OCI-LY7 (cell line): ENCODE measurements at regions of chr6 and their contacts with region 1.

Region 1: DNA sequence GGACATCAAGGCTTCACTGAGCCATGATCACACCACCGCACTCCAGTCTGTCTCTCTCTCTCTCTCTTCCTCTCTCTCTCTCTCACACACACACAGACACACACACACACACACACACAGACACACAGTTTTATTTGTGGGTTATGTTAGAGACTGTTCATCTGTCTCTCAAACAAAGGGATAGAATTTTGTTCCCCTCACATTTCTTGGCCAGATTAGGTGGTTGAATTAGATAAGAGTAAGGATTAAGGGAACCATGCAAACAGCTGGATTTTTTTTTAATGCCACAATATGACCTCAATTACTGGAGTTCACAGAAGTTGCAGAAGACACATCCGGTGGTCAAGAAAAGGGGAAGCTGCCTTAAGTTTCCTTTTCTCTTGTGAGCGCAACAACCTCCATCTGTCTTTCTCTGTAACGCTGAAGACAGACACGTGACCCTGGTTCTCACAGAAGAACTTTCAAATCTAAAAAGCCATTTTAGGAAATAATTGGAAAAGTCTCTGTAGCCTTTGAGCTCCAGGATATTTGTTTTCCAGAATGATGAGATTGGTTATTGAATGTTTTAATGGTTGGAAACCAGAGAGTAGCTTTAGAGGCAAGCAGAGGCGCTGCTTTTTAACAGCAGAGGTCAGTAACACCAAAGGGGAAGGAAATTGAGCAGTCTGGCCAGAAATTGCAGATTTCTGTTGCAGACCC is 33.0 kb upstream of the LGSN start:
- DNase-seq: peak; percentile 89
- H3K4me3 ChIP-seq: peak overlapping the region; percentile 48
- H3K27ac ChIP-seq: peak overlapping the region; percentile 55
- H3K4me1 ChIP-seq: peaks cover 23% of the 10 kb centered on the region
- CTCF ChIP-seq: peak; percentile 88

Region 2: GRCh38 chr6:63188828-63189227 is 163.9 kb before region 1 on chr6:
- CTCF ChIA-PET with region 1: no interaction called
- POLR2A ChIA-PET with region 1: no interaction called
- intact Hi-C with region 1: no loop called
- DNase-seq: no peak
- H3K4me3 ChIP-seq: no peak overlapping the region
- H3K27ac ChIP-seq: no peak overlapping the region
- H3K4me1 ChIP-seq: no peaks in the 10 kb centered on the region
- CTCF ChIP-seq: no peak

Region 3: DNA sequence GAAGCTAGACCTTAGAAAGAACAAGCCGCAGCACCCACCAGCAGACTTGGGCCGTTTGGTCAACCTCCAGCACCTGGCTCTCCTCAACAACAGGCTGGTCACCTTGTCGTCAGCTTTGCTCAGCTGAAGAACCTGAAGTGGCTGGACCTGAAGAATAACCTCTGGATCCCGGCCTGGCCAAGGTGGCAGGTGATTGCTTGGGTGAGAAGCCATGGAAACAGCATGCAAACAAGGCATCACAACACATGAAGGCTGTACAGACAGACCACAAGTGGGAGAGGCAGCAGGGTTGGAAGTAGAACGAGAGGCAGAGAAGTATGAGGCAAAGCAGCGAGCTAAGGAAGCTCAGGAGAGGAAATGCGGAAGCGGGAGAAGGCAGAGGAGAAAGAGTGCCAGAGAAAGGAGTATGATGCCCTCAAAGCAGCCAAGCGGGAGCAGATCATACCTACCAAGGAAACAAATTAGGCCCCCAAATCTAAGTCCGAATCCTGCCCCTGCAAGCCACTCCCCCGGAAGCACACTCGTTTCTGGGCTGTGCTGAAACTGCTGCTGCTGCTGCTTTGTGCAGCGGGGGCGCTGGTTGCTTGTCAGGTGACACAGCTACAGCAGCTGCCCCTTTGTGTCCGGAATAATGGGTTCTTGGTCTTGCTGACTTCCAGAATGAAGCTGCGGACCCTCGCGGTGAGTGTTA is 88.7 kb after region 1 on chr6:
- CTCF ChIA-PET with region 1: no interaction called
- POLR2A ChIA-PET with region 1: no interaction called
- intact Hi-C with region 1: loop called (anchors 2 kb)
- DNase-seq: peak; percentile 77
- H3K4me3 ChIP-seq: peak overlapping the region; percentile 72
- H3K27ac ChIP-seq: peak overlapping the region; percentile 56
- H3K4me1 ChIP-seq: peaks cover 4% of the 10 kb centered on the region
- CTCF ChIP-seq: peak; percentile 58

Region 4: DNA sequence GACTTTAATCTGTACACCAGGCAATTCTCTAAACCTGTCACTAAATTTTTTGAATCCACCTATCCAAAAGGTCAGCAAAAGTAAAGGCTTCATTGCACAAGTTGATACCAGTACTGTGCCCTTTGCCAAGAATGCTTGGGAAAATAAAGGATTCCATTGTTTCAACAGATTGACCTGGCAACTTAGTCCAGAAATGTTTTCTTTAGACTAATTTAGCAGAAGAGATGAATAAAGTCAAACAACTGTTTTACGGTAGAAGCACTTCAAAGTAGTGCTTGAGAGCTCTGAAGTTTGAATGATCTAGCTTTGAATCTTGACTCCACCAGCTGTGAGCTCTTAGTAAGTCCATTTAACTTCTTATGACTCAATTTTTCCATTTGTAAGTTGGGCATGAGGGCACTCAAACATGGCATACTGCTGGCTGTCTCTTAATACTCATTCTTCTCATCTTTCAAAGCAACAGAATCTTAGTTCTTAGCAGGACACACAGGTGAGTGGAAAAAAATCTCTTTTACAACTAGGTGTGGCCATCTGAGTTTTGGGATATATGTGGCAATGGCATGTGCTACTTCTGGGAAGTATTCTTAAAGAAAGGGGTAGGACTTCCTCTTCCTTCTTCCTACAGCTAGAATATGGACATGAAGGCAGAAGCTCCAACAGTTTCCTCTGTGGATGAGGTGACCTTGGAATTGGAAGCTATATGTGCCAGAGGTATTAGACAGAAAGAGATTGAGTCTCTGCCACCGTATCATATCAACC is 163.6 kb after region 1 on chr6:
- CTCF ChIA-PET with region 1: no interaction called
- POLR2A ChIA-PET with region 1: interaction called, 6 read pairs
- intact Hi-C with region 1: loop called (anchors 2 kb)
- DNase-seq: no peak
- H3K4me3 ChIP-seq: no peak overlapping the region
- H3K27ac ChIP-seq: no peak overlapping the region
- H3K4me1 ChIP-seq: peaks cover 25% of the 10 kb centered on the region
- CTCF ChIP-seq: no peak

Region 5: DNA sequence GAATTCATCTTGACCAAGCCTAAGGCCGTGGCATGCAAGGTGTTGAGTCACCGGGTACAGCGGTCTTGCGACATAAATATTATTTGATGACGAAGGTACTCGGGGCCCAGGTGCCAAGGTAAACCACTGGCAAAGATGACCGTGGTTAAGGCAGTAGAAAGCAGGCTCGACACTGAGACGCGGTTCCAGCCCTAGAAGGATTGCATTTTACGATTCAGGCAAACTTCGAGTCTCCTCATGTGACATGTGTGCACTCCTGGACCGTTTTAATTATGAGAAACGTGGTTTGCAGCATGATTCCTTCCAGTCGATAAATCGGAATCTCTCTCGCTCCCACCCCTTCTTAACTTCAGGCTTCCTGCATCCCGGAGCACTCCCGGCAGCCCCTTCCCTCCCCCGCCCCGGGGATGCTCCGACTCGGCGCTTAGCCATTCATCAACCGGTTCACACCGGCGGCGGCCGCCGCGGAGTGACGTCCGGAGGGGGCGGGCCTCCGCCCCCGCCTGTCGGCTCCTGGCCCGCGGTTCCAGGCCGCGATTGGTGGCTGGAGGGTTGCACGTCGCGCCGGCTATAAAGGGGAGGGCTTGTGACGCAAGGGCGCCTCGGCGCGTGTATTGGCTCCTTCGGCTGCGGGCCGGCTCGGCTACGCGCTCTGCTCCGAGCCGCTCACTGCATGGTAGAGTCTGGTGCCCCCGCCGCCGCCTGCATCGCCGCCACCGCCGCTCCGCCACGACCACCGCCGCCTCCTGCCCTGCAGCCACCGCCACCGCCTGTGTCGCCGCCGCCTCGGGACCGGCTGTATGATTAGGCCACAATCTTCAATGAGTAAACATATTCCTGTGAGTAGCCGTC is 219.4 kb after region 1 on chr6 and contains the starts of genes LOC128125822 and PTP4A1:
- CTCF ChIA-PET with region 1: no interaction called
- POLR2A ChIA-PET with region 1: interaction called, 3 read pairs
- intact Hi-C with region 1: loop called (anchors 1 kb)
- DNase-seq: peak; percentile 99
- H3K4me3 ChIP-seq: peak within 1 kb of the TSS; percentile 85
- H3K27ac ChIP-seq: peak within 1 kb of the TSS; percentile 76
- H3K4me1 ChIP-seq: peaks cover 23% of the 10 kb centered on the region
- CTCF ChIP-seq: no peak
- total RNA-seq, gene PTP4A1: 20.9 and 21.2 TPM in 2 replicates

Region 6: DNA sequence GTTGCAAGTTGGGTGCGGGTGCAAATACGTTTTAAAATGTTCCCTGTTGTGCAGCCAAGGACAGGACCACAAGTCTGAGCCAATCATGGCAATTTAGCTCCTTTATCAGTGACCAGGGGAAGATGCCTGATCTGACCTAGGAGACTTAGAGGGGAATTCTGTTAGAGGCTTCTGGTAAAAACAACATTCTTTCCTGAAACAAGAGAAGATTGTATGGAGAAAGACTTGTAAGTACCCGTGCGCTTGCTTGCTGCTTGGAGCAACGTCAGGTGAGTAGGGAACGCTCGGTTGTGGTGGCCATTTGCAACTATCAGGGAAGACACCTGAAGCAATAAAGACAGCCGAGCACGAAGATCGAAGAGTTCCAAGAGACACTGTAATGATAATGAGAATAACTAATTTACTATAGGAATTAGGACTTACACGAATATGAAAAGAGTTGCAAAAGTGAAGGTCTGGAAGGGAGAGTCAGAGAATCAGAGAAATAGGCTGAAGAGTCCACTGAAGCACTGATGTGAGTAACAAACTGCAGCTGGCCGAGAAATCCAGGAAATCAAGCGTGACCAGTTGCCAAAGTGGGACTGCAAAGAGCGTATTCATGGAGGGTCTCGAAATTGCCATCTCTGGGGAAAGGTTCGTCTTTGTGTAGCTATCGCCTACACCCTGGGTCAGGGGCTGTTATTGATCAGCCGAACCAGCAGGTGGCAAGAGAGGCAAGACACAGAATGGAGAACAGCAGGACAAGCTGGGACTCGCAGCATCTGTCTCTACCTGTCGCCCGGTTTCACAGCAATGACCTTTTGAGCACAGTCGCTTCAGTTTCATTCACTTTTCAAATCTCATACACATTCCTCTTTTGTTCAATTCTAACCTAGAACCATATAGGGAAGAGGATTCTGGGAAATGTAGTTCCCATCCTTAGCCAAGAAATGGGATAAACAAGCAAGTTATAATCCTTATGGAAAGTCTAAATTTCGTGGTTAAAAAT is 245.6 kb after region 1 on chr6:
- CTCF ChIA-PET with region 1: interaction called, 4 read pairs
- POLR2A ChIA-PET with region 1: no interaction called
- intact Hi-C with region 1: loop called (anchors 1 kb)
- DNase-seq: peak; percentile 88
- H3K4me3 ChIP-seq: peak overlapping the region; percentile 64
- H3K27ac ChIP-seq: peak overlapping the region; percentile 41
- H3K4me1 ChIP-seq: peaks cover 16% of the 10 kb centered on the region
- CTCF ChIP-seq: peak; percentile 95

Region 7: GRCh38 chr6:63764318-63764916 is 411.7 kb after region 1 on chr6:
- CTCF ChIA-PET with region 1: interaction called, 7 read pairs
- POLR2A ChIA-PET with region 1: interaction called, 7 read pairs
- intact Hi-C with region 1: loop called (anchors 1 kb)
- DNase-seq: peak; percentile 71
- H3K4me3 ChIP-seq: no peak overlapping the region
- H3K27ac ChIP-seq: no peak overlapping the region
- H3K4me1 ChIP-seq: no peaks in the 10 kb centered on the region
- CTCF ChIP-seq: peak; percentile 89

Region 8: DNA sequence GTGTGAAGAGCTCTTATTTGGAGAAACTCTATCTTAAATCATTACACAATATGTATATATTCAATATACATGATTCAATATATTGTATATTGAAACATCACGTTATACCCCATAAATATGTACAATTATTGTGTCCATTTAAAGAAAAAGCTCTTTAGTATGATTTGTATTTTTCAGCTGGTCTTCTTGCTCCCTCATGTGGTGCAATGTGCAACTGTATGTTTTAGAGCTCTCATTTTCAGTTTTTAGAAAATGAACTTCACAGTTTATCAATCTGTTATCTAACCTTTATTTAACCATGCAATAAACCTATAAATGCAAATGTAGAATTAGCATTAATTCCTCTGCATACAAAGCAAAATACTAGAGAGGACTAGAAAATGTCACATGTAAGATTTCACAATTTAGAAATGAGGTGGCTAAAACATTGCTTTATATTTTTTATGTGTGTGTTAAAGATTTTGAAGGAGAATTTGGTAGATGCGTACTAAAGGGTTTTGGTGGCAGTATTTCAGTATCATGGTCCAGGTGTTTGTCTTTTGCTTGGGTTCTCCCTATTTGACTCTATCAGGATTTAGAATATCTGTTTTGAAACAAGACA is 450.0 kb after region 1 on chr6:
- CTCF ChIA-PET with region 1: interaction called, 9 read pairs
- POLR2A ChIA-PET with region 1: interaction called, 7 read pairs
- intact Hi-C with region 1: loop called (anchors 2 kb)
- DNase-seq: peak; percentile 26
- H3K4me3 ChIP-seq: no peak overlapping the region
- H3K27ac ChIP-seq: no peak overlapping the region
- H3K4me1 ChIP-seq: no peaks in the 10 kb centered on the region
- CTCF ChIP-seq: peak; percentile 85

Region 9: DNA sequence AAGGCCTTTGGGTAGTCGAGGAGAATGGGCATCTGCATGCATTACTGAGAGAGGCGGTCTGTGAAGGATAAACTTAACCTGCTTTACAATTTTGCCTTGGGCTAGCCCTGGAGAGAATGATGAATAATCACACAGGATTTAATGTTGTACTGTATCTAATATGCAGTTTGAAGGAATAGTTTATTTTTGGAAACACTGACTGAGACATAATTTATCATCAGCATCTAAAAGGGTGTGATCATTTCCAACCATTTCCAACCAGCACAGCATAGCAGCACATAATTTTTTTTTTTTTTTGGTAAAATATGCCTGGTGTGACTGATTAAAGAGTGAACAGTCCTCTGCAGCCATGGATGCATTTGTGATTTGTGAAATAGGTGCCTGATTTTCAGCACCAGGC is 802.3 kb after region 1 on chr6:
- CTCF ChIA-PET with region 1: no interaction called
- POLR2A ChIA-PET with region 1: no interaction called
- intact Hi-C with region 1: no loop called
- DNase-seq: no peak
- H3K4me3 ChIP-seq: no peak overlapping the region
- H3K27ac ChIP-seq: no peak overlapping the region
- H3K4me1 ChIP-seq: no peaks in the 10 kb centered on the region
- CTCF ChIP-seq: no peak